ENCODE measurements at regions of chr3 and their contacts with region 1.

Region 1: GRCh38 chr3:54257125-54257720 is 134.9 kb downstream of the CACNA2D3 start:
- DNase-seq: no peak
- H3K4me3 ChIP-seq: no peak overlapping the region
- H3K27ac ChIP-seq: no peak overlapping the region
- H3K4me1 ChIP-seq: no peaks in the 10 kb centered on the region
- H3K27me3 ChIP-seq: peaks cover 2% of the 10 kb centered on the region
- CTCF ChIP-seq: no peak

Region 2: DNA sequence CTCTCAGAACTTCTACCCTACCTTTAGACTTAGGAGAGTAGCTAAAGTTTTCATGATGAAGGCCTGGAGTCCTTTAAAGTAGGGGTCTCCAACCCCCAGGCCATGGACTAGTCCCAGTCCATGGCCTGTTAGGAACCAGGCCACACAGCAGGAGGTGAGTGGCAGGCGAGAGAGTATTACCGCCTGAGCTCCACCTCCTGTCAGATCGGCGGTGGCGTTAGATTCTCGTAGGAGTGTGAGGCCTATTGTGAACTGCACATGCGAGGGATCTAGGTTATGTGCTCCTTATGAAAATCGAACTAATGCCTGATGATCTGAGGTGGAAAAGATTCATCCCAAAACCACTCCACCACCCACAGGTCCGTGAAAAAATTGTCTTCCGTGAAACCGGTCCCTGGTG is 153.1 kb before region 1 on chr3:
- CTCF ChIA-PET with region 1: no interaction called
- dilution Hi-C with region 1: no loop called
- in situ Hi-C with region 1: no loop called
- intact Hi-C with region 1: no loop called
- DNase-seq: no peak
- H3K4me3 ChIP-seq: no peak overlapping the region
- H3K27ac ChIP-seq: no peak overlapping the region
- H3K4me1 ChIP-seq: no peaks in the 10 kb centered on the region
- H3K27me3 ChIP-seq: no peaks in the 10 kb centered on the region
- CTCF ChIP-seq: no peak

Region 3: DNA sequence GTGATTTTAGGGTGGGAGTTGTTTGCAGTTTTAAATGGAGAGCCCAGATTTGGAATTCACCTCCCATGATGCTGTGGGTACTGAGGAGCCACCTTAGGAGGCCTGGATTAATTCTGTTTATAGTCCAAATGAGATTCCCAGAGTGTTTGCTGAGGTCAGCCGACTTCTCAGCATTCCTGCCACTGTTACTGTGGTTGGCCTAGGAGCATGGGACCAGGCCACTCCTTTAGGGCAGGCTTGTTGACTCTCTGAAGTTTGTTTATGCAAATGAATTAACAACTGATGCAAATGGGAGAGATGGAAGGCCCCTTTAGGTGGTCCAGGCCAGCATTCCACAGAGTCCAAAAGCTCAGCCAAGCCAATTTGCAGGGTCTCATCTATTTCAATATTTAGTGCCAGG is 88.8 kb before region 1 on chr3:
- CTCF ChIA-PET with region 1: no interaction called
- dilution Hi-C with region 1: no loop called
- in situ Hi-C with region 1: no loop called
- intact Hi-C with region 1: no loop called
- DNase-seq: no peak
- H3K4me3 ChIP-seq: no peak overlapping the region
- H3K27ac ChIP-seq: no peak overlapping the region
- H3K4me1 ChIP-seq: no peaks in the 10 kb centered on the region
- H3K27me3 ChIP-seq: no peaks in the 10 kb centered on the region
- CTCF ChIP-seq: no peak

Region 4: GRCh38 chr3:54307566-54308180 is 50.5 kb after region 1 on chr3:
- CTCF ChIA-PET with region 1: no interaction called
- dilution Hi-C with region 1: loop called (anchors 5 kb)
- in situ Hi-C with region 1: no loop called
- intact Hi-C with region 1: no loop called
- DNase-seq: no peak
- H3K4me3 ChIP-seq: no peak overlapping the region
- H3K27ac ChIP-seq: no peak overlapping the region
- H3K4me1 ChIP-seq: no peaks in the 10 kb centered on the region
- H3K27me3 ChIP-seq: no peaks in the 10 kb centered on the region
- CTCF ChIP-seq: no peak